ENCODE measurements at regions of chr21 and their contacts with region 1.

Region 1: GRCh38 chr21:42781150-42781970 is 98.0 kb downstream of the WDR4 start:
- DNase-seq: peak in 2 of 14 experiments; percentile 15 to 27
- ATAC-seq: no peak
- H3K4me3 ChIP-seq: no peak overlapping the region
- H3K4me3 Mint-ChIP-seq: peak overlapping the region; percentile 57
- H3K27ac ChIP-seq: peak overlapping the region in 1 of 2 donors; percentile 2
- H3K27ac Mint-ChIP-seq: peak overlapping the region; percentile 99
- H3K4me1 ChIP-seq: peaks cover 46% of the 10 kb centered on the region
- H3K4me1 Mint-ChIP-seq: peaks cover 56% of the 10 kb centered on the region
- H3K27me3 ChIP-seq: no peaks in the 10 kb centered on the region
- H3K27me3 Mint-ChIP-seq: no peaks in the 10 kb centered on the region
- CTCF ChIP-seq: no peak

Region 2: DNA sequence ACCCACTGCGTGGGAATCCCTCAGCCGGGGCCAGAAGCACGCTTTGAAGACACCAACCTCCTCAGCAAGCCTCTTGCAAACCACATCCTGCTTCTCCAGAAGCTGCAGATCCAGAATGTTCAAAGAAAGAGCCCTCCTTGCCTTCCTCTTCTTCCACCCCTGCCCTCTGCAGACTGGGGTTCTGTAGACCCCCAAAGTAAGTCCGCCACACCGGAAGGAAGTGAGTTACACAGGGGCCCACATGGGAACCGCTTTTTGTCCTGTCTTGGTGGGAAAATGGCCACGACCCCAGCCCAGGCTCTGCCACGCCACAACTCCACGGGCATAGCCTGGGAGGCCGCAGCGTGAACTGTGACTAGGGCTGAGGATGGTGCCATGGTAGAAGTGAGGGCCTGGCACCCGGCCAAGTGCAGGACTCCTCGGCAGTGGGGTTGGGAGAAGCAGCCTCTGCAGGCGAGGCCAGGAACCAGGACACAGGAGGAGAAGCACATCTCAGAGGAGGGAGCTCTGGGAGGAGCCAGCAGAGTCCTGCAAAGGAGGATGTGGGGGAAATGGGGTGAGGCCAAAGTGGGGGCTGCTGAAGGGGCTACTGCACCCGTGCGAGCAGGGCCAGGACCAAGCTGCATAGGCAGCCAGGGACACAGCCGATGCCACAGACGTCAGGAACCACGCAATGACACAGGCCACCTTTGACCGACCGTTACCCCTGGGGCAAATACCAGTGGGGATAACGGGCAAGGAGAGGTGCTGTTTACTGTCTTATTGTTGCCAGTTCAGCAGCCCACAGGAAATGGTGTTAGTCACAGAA is 97.0 kb before region 1 on chr21:
- CTCF ChIA-PET with region 1: no interaction called
- POLR2A ChIA-PET with region 1: interaction called, 5 read pairs
- intact Hi-C with region 1: loop called in 1 of 2 experiments (anchors 5 kb)
- DNase-seq: peak; percentile 23 to 73 (median 42)
- ATAC-seq: peak; percentile 68
- H3K4me3 ChIP-seq: peak overlapping the region; percentile 41
- H3K4me3 Mint-ChIP-seq: peak overlapping the region; percentile 91
- H3K27ac ChIP-seq: peak overlapping the region; percentile 29 to 34
- H3K27ac Mint-ChIP-seq: peak overlapping the region; percentile 93
- H3K4me1 ChIP-seq: peaks cover 50% of the 10 kb centered on the region
- H3K4me1 Mint-ChIP-seq: peaks cover 49% of the 10 kb centered on the region
- H3K27me3 ChIP-seq: no peaks in the 10 kb centered on the region
- H3K27me3 Mint-ChIP-seq: no peaks in the 10 kb centered on the region
- CTCF ChIP-seq: no peak

Region 3: GRCh38 chr21:42724226-42724920 is 57.0 kb before region 1 on chr21:
- CTCF ChIA-PET with region 1: no interaction called
- POLR2A ChIA-PET with region 1: no interaction called
- intact Hi-C with region 1: no loop called
- DNase-seq: no peak
- ATAC-seq: no peak
- H3K4me3 ChIP-seq: no peak overlapping the region
- H3K4me3 Mint-ChIP-seq: no peak overlapping the region
- H3K27ac ChIP-seq: no peak overlapping the region
- H3K27ac Mint-ChIP-seq: no peak overlapping the region
- H3K4me1 ChIP-seq: peaks cover 6% of the 10 kb centered on the region
- H3K4me1 Mint-ChIP-seq: peaks cover 13% of the 10 kb centered on the region
- H3K27me3 ChIP-seq: no peaks in the 10 kb centered on the region
- H3K27me3 Mint-ChIP-seq: no peaks in the 10 kb centered on the region
- CTCF ChIP-seq: no peak

Region 4: DNA sequence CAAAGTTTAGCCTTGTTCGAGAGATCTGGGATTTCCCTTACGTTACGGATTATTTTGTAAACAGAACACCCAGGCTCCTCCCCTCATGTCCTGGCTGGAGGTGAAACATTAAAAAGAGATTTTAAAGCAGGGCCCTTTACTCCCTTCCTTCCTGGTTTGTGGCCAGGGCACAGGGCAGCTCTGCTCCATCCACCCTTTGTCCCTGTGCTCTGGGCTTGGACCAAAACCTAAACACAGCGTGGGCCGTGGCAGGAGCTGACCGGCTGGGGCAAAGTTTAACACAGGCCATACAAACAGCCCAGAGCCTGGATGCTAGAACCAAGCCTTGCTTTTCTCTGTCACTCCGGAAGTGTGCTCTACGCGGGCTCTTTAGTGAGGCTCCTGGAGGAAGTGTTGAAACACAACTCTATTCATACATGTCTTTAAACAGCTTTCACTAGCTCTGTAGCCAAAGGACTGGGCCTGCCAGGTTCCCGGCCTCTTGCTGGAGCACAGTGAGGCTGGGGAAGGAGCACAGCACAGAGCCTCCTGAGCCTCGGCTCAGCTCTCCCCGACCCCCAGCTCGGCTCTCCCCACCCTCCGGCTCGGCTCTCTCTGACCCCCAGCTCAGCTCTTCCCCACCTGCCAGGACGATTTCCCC is 43.3 kb before region 1 on chr21:
- CTCF ChIA-PET with region 1: interaction called, 3 read pairs
- POLR2A ChIA-PET with region 1: interaction called, 20 read pairs
- intact Hi-C with region 1: loop called in 1 of 2 experiments (anchors 2 kb)
- DNase-seq: peak in 12 of 14 experiments; percentile 6 to 71 (median 44)
- ATAC-seq: peak; percentile 93
- H3K4me3 ChIP-seq: no peak overlapping the region
- H3K4me3 Mint-ChIP-seq: peak overlapping the region; percentile 80
- H3K27ac ChIP-seq: peak overlapping the region; percentile 67 to 74
- H3K27ac Mint-ChIP-seq: peak overlapping the region; percentile 97
- H3K4me1 ChIP-seq: peaks cover 55% of the 10 kb centered on the region
- H3K4me1 Mint-ChIP-seq: peaks cover 59% of the 10 kb centered on the region
- H3K27me3 ChIP-seq: no peaks in the 10 kb centered on the region
- H3K27me3 Mint-ChIP-seq: no peaks in the 10 kb centered on the region
- CTCF ChIP-seq: no peak

Measured in CD4-positive, alpha-beta T cell (primary cell).